ENCODE measurements at regions of chr6 and their contacts with region 1.

Region 1: DNA sequence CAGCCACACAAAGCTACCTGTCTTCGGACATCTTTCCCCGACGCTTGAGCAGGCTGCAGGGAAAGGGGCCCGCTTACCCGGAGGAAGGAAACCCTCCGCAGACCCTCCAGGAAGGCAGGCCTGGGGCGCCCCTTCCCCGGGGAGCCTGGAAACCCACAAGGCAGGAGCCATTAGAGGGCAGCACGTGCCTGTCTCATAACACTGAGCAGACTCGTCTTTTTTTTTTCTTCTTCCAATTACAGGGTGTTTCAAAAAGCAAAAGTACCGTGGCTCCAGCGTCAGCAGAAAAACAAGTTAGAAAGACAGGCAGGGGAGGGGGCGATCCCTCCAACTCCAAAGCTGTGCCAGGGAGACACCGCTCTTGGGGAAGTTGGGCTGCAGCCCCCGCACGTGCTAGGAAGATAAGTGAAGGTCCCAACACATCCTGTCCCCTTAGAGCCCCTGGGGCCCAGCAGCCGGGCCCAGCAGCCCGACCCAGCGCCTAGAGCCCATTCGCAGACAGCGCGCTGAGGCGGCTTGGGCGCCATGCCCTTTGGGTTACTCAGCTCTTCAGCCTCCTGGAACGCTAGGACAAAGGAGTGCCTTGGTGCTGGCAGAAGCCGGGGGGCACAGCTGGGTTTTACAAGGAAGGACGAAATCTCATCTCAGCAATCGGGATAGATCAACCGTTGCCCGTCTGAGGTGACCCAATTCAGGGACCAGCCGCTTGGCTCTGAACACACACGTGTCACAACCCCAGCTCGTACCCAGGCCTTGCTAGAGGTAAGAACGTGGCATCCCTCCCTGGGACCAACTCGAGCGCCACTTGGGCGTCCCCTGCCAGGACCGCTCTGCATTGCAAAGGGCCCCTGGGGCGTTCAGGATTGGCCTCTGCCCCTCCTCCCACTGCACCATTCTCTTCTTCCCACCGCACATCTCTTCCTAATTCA is 136.3 kb downstream of the LY86 start:
- DNase-seq: peak; percentile 82
- H3K4me3 Mint-ChIP-seq: peak overlapping the region; percentile 34
- H3K27ac Mint-ChIP-seq: no peak overlapping the region
- H3K4me1 Mint-ChIP-seq: peaks cover 4% of the 10 kb centered on the region
- H3K27me3 Mint-ChIP-seq: no peaks in the 10 kb centered on the region

Region 2: DNA sequence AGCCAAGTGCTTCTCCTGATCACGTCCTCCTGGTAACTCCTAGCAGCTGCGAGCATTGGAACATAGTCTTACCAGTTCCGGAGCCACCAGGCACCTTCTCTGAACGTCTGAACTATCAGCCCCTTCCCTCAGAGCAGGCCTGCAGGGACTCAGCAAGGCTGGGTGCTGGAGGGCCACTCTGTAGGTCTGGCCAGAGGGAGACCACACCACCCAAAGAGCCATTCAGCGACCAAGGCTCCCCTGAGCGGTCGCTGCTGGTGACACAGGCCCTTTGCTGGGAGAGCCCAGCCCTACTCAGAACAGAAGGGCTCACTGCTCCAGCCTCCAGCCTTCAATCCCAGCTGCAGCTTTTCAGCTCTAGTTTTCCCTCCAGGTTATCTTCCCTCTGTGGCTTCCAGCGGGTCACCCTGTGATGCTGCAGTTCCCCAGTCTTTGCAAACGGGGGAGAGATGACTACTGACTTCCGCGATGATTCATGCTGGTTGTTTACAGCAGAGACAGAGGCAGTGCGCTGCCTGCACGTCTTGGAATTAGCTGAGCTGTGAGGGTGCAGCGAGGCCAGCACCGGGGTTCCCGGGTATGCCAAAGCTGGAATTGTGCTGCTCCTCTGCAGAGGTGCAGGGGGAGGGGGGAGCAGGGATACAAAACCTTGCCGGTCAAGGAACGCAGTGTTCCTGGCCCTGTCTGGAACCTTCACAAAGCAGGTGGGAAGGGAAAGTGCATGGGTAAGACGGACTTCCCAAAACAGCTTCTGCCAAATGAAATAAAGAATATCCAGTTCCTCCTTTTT is 25.1 kb after region 1 on chr6:
- CTCF ChIA-PET with region 1: interaction called, 14 read pairs
- intact Hi-C with region 1: no loop called
- DNase-seq: peak; percentile 79
- H3K4me3 Mint-ChIP-seq: no peak overlapping the region
- H3K27ac Mint-ChIP-seq: no peak overlapping the region
- H3K4me1 Mint-ChIP-seq: peaks cover 23% of the 10 kb centered on the region
- H3K27me3 Mint-ChIP-seq: no peaks in the 10 kb centered on the region

Region 3: DNA sequence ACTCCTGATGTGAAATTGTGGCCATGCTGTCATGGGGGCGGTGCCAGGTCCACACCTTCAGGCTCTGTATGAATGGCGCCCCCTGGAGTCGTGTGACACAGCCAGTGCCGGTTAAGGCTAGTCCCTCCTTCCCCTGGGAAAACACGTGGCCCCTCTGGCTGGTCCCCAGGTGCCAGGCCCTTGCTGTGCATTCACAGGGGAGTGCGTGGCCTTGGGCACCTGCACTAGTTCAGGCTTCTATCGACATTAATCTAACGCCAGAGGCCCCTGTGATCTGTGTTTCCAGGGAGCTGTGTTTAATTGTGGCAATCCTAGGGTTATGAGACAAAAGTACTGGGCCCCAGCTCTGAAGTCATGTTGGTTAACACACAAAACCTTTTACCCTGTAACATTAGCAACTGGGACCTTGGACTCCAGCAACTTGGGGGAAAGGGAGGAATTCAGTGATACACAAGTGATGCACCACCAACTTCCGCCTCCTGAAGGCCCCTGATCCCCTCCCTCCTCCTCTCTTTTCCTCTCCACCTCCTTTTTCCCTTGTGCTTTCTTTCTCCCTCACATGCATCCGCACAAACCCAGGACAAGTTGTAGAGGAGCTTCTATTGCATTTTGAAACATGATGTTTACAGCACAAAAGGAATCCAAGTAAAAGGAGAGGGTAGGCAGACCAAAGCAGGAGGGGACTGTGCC is 514.2 kb after region 1 on chr6:
- CTCF ChIA-PET with region 1: interaction called, 15 read pairs
- intact Hi-C with region 1: loop called (anchors 1 kb)
- DNase-seq: peak; percentile 93
- H3K4me3 Mint-ChIP-seq: no peak overlapping the region
- H3K27ac Mint-ChIP-seq: peak overlapping the region; percentile 15
- H3K4me1 Mint-ChIP-seq: peaks cover 27% of the 10 kb centered on the region
- H3K27me3 Mint-ChIP-seq: no peaks in the 10 kb centered on the region

Region 4: DNA sequence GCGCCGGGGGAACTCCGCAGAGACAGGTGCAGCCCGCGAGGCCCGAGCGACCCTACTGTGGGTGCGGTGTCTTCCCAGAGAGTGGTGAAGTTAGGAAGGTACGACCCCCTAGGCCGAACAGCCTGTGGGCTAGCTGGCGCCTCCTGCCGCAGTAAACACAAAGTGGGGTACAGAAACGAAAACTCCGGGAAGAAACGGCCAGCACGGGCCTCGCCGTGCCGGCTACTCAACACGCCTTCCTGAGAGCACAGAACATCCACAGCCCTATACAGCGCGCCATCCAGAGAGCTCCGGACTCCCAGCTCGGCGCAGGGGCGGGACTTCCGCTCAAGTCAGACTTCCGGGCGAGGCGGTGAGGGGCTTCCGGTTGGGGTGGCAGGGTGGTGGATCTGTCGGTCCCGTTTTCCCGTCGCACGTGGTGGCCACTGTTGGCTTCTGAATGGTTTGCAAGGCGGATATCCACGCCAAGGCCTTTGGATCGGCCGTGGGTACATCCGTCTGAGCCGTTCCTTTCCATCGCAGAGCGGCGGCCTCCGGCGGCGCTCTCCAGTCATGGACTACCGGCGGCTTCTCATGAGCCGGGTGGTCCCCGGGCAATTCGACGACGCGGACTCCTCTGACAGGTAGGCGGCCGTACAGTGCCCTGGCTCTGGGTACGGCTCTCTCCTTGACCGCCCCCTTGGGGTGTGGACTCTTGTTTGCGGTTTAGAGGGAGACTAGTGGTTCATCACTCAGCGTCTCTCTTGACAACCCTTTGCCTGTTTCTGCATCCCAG is 664.8 kb after region 1 on chr6 and contains the starts of genes CAGE1 and RIOK1:
- CTCF ChIA-PET with region 1: no interaction called
- intact Hi-C with region 1: loop called (anchors 10 kb)
- DNase-seq: peak; percentile 97
- H3K4me3 Mint-ChIP-seq: peak within 1 kb of the TSS; percentile 94
- H3K27ac Mint-ChIP-seq: peak within 1 kb of the TSS; percentile 97
- H3K4me1 Mint-ChIP-seq: peaks cover 40% of the 10 kb centered on the region
- H3K27me3 Mint-ChIP-seq: no peaks in the 10 kb centered on the region
- total RNA-seq, gene CAGE1: 0.25 to 0.26 TPM
- total RNA-seq, gene RIOK1: 33.8 to 38.5 TPM